Sigmoid colon (tissue), 7 donors: ENCODE measurements at regions of chr19 and their contacts with region 1.

Region 1: GRCh38 chr19:47745010-47745901 is at the start of gene NOP53:
- DNase-seq: peak; percentile 99
- H3K4me3 ChIP-seq: peak within 1 kb of the TSS; percentile 68 to 83 (median 78)
- H3K27ac ChIP-seq: peak within 1 kb of the TSS; percentile 93 to 97 (median 96)
- H3K4me1 ChIP-seq: peaks cover 0 to 52% (median 38%) of the 10 kb centered on the region in 4 donors
- H3K27me3 ChIP-seq: no peaks in the 10 kb centered on the region
- CTCF ChIP-seq: no peak
- EP300 ChIP-seq: peak in 1 of 4 donors; percentile 6
- POLR2A ChIP-seq: peak; percentile 79 to 84
- total RNA-seq, gene NOP53: 432 to 576 (median 557) TPM

Region 2: DNA sequence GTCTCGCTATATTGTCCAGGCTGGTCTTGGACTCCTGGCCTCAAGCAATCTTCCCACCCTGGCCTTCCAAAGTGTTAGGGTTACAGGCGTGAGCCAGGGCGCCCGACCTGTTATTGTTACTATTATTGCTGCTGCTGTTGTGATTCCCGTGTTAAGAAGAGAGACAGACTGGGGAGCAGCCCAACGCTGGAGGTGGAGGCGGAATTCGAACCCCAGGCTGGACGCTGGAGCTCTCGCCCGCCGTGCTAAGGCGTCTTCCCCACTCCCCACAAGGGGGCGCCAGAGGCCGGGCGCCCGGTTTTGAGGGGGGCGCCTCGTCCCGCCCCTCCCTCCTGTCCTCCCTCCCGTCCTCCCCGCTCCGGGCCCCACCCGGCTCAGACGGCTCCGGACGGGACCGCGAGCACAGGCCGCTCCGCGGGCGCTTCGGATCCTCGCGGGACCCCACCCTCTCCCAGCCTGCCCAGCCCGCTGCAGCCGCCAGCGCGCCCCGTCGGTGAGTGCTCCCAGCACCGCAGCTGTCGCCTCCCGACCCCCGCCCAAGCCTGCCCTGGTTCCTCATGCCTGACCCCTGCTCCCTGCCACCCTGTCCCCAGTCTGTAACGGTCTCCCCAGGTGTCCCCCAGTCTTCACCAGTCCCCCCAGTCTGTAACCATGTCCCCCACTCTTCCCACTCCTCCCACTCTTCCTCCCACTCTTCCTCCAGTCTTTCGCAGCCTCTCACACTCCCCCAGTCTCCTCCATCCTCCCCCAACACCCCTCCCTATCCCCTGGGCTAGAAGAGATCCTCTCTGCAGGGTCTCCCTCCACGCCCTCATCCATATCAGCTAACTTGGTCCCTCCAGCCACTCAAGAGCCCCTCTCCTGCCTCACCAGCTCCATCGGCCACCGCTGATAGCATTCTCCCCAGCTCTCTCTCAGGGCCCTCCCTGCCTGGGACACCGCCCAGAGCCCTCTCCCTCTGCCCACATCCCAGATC is 31.9 kb before region 1 on chr19 and contains the start of gene EHD2:
- intact Hi-C with region 1: loop called (anchors 1 kb)
- DNase-seq: peak; percentile 93
- H3K4me3 ChIP-seq: peak within 1 kb of the TSS; percentile 79 to 99 (median 92)
- H3K27ac ChIP-seq: peak within 1 kb of the TSS; percentile 95 to 99 (median 96)
- H3K4me1 ChIP-seq: peaks cover 0 to 44% (median 42%) of the 10 kb centered on the region in 4 donors
- H3K27me3 ChIP-seq: no peaks in the 10 kb centered on the region
- CTCF ChIP-seq: peak; percentile 93 to 98 (median 97)
- EP300 ChIP-seq: no peak
- POLR2A ChIP-seq: peak; percentile 82 to 90
- total RNA-seq, gene EHD2: 41.8 to 184 (median 72.4) TPM

Region 3: GRCh38 chr19:47719047-47719859 is 26.0 kb before region 1 on chr19:
- intact Hi-C with region 1: loop called (anchors 1 kb)
- DNase-seq: peak; percentile 99
- H3K4me3 ChIP-seq: peak overlapping the region; percentile 13 to 43 (median 36)
- H3K27ac ChIP-seq: peak overlapping the region; percentile 95 to 99 (median 97)
- H3K4me1 ChIP-seq: peaks cover 0 to 97% (median 91%) of the 10 kb centered on the region in 4 donors
- H3K27me3 ChIP-seq: no peaks in the 10 kb centered on the region
- CTCF ChIP-seq: no peak
- EP300 ChIP-seq: peak in 2 of 4 donors; percentile 45 to 70
- POLR2A ChIP-seq: peak in 1 of 2 donors; percentile 25

Region 4: GRCh38 chr19:47730910-47731309 is 14.3 kb before region 1 on chr19:
- intact Hi-C with region 1: loop called (anchors 1 kb)
- DNase-seq: no peak
- H3K4me3 ChIP-seq: no peak overlapping the region
- H3K27ac ChIP-seq: peak overlapping the region; percentile 92 to 99 (median 96)
- H3K4me1 ChIP-seq: peaks cover 0 to 46% (median 43%) of the 10 kb centered on the region in 4 donors
- H3K27me3 ChIP-seq: no peaks in the 10 kb centered on the region
- CTCF ChIP-seq: no peak
- EP300 ChIP-seq: no peak
- POLR2A ChIP-seq: no peak

Region 5: DNA sequence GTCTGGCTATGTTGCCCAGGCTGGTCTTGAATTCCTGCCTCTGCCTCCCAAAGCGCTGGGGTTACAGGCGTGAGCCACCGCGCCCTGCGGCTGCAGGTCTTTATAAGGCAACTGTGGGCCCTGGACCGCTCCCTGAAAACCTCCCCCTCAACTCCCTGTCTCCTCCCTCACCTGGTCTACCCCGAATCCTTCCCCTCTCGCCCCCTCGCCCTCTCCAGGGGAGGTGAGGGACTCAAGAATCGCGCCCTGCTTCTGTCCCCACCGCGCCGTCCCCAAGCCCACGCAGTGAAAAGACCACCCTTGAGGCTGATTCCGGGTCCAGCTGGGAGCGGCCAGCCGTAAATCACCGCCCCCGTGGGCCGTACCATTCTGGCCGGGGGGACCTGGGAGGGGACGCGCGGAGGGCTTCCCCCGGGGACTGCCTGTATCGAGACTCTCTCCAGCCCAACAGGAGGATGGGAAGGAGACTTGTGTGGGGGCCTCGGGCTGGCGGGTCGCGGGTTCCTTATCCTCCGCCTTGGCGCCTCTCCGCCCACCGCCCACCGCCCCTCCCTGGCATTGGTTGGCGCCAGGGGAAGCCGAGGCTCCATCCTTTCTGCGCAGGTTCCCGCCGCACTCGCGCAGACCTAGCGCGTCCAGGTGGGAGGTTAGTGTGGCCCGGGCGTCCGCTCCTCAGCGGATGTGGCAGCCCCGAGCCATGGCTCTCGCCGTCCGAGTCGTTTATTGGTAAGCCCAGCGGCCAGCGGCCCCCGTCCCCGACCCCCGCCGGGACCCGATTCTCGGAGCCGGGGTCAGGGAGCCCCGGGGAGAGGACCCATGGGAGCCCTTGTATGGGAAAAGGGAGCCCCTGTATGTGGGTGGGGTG is 33.1 kb after region 1 on chr19 and contains the start of gene SELENOW:
- intact Hi-C with region 1: loop called (anchors 2 kb)
- DNase-seq: peak; percentile 88
- H3K4me3 ChIP-seq: peak within 1 kb of the TSS; percentile 85 to 97 (median 90)
- H3K27ac ChIP-seq: peak within 1 kb of the TSS; percentile 96 to 100 (median 97)
- H3K4me1 ChIP-seq: peaks cover 0 to 52% (median 47%) of the 10 kb centered on the region in 4 donors
- H3K27me3 ChIP-seq: no peaks in the 10 kb centered on the region
- CTCF ChIP-seq: no peak
- EP300 ChIP-seq: no peak
- POLR2A ChIP-seq: peak; percentile 99
- total RNA-seq, gene SELENOW: 1,579 to 3,138 (median 2,179) TPM